B cell (primary cell): ENCODE measurements at regions of chr1 and their contacts with region 1.

Region 1: GRCh38 chr1:204446370-204447111 is 34.9 kb upstream of the PPP1R15B start:
- DNase-seq: peak; percentile 90
- ATAC-seq: peak; percentile 88
- H3K4me3 ChIP-seq: no peak overlapping the region
- H3K4me3 Mint-ChIP-seq: peak overlapping the region; percentile 52
- H3K27ac ChIP-seq: peak overlapping the region; percentile 27 to 64
- H3K27ac Mint-ChIP-seq: peak overlapping the region; percentile 81
- H3K4me1 ChIP-seq: peaks cover 57 to 59% of the 10 kb centered on the region in 2 donors
- H3K4me1 Mint-ChIP-seq: peaks cover 58% of the 10 kb centered on the region
- H3K27me3 ChIP-seq: no peaks in the 10 kb centered on the region
- H3K27me3 Mint-ChIP-seq: no peaks in the 10 kb centered on the region
- CTCF ChIP-seq: peak; percentile 89

Region 2: GRCh38 chr1:204213668-204214662 is 232.6 kb before region 1 on chr1 and contains the start of gene GOLT1A:
- CTCF ChIA-PET with region 1: no interaction called
- POLR2A ChIA-PET with region 1: no interaction called
- intact Hi-C with region 1: no loop called
- DNase-seq: peak; percentile 54
- ATAC-seq: peak; percentile 57
- H3K4me3 ChIP-seq: peak within 1 kb of the TSS in 3 of 5 experiments; percentile 25 to 50 (median 34)
- H3K4me3 Mint-ChIP-seq: peak within 1 kb of the TSS; percentile 75
- H3K27ac ChIP-seq: no peak within 1 kb of the TSS
- H3K27ac Mint-ChIP-seq: no peak within 1 kb of the TSS
- H3K4me1 ChIP-seq: peaks cover 12 to 15% of the 10 kb centered on the region in 2 donors
- H3K4me1 Mint-ChIP-seq: peaks cover 7% of the 10 kb centered on the region
- H3K27me3 ChIP-seq: peaks cover 0 to 17% (median 7%) of the 10 kb centered on the region in 4 experiments
- H3K27me3 Mint-ChIP-seq: peaks cover 4% of the 10 kb centered on the region
- CTCF ChIP-seq: no peak
- total RNA-seq, gene GOLT1A: not detected in 2 replicates

Region 3: DNA sequence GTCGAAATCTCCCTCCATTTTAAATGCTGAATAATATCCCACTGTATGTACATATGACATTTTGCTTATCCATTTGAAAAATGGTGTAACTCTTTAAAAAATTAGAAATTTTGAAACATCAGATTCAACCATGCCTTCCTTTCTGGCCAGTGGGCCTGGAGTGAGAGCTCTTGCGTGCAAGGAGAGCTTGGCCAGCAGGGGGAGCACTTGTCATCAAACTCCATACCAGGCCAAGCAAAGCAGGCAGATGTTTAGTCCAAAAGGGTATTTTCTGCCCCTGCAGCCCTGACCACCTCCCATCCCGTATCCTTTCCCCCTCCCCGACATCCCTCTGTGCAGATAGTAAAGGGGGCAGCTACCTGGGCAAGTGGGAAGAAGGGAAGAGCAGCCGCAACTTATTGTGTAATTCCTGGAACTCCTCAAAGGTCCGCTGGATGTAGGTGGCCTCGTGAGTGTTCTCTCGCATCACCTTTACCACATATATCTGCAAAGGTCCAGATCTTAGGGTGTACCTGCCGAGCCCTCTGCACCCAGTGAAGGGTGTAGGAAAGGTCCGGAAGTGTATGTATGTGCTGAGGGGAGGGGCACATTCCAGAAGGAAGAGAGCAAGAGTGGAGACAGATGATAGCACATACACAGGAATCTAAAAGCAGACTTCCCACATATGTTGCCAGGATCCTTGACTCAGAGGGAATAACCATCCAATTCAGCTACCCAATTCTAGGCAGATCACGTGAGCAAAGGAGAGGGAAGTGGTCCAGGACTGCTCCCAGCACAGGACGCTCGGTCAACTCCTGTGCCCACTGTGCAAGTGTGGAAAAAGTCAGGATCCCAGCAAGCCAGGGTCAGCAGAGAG is 15.0 kb before region 1 on chr1:
- CTCF ChIA-PET with region 1: interaction called, 249 read pairs
- POLR2A ChIA-PET with region 1: interaction called, 4 read pairs
- intact Hi-C with region 1: loop called (anchors 2 kb)
- DNase-seq: peak; percentile 84
- ATAC-seq: peak; percentile 77
- H3K4me3 ChIP-seq: no peak overlapping the region
- H3K4me3 Mint-ChIP-seq: no peak overlapping the region
- H3K27ac ChIP-seq: no peak overlapping the region
- H3K27ac Mint-ChIP-seq: peak overlapping the region; percentile 1
- H3K4me1 ChIP-seq: no peaks in the 10 kb centered on the region
- H3K4me1 Mint-ChIP-seq: no peaks in the 10 kb centered on the region
- H3K27me3 ChIP-seq: no peaks in the 10 kb centered on the region
- H3K27me3 Mint-ChIP-seq: no peaks in the 10 kb centered on the region
- CTCF ChIP-seq: peak; percentile 93

Region 4: GRCh38 chr1:204480515-204480914 is 34.0 kb after region 1 on chr1:
- CTCF ChIA-PET with region 1: interaction called, 181 read pairs
- POLR2A ChIA-PET with region 1: interaction called, 8 read pairs
- intact Hi-C with region 1: loop called (anchors 1 kb)
- DNase-seq: peak; percentile 73
- ATAC-seq: peak; percentile 53
- H3K4me3 ChIP-seq: peak overlapping the region in 3 of 5 experiments; percentile 26 to 32 (median 32)
- H3K4me3 Mint-ChIP-seq: peak overlapping the region; percentile 71
- H3K27ac ChIP-seq: peak overlapping the region; percentile 78 to 95
- H3K27ac Mint-ChIP-seq: peak overlapping the region; percentile 98
- H3K4me1 ChIP-seq: peaks cover 93 to 94% of the 10 kb centered on the region in 2 donors
- H3K4me1 Mint-ChIP-seq: peaks cover 94% of the 10 kb centered on the region
- H3K27me3 ChIP-seq: no peaks in the 10 kb centered on the region
- H3K27me3 Mint-ChIP-seq: no peaks in the 10 kb centered on the region
- CTCF ChIP-seq: no peak

Region 5: GRCh38 chr1:204516180-204516879 is 69.8 kb after region 1 on chr1 and contains the start of gene MDM4:
- CTCF ChIA-PET with region 1: interaction called, 24 read pairs
- POLR2A ChIA-PET with region 1: interaction called, 4 read pairs
- intact Hi-C with region 1: no loop called
- DNase-seq: peak; percentile 97
- ATAC-seq: peak; percentile 78
- H3K4me3 ChIP-seq: peak within 1 kb of the TSS; percentile 75 to 96 (median 91)
- H3K4me3 Mint-ChIP-seq: no peak within 1 kb of the TSS
- H3K27ac ChIP-seq: peak within 1 kb of the TSS; percentile 95 to 97
- H3K27ac Mint-ChIP-seq: no peak within 1 kb of the TSS
- H3K4me1 ChIP-seq: peaks cover 83 to 92% of the 10 kb centered on the region in 2 donors
- H3K4me1 Mint-ChIP-seq: peaks cover 68% of the 10 kb centered on the region
- H3K27me3 ChIP-seq: no peaks in the 10 kb centered on the region
- H3K27me3 Mint-ChIP-seq: no peaks in the 10 kb centered on the region
- CTCF ChIP-seq: no peak
- total RNA-seq, gene MDM4: 374 and 378 TPM in 2 replicates